Activated naive CD4-positive, alpha-beta T cell treated with anti-CD3 and anti-CD28 coated beads, Interleukin-2, amount 10 ng/mL, durations not matched to agents 7 days and 5 days (primary cell): ENCODE measurements at regions of chr5 and their contacts with region 1.

Region 1: DNA sequence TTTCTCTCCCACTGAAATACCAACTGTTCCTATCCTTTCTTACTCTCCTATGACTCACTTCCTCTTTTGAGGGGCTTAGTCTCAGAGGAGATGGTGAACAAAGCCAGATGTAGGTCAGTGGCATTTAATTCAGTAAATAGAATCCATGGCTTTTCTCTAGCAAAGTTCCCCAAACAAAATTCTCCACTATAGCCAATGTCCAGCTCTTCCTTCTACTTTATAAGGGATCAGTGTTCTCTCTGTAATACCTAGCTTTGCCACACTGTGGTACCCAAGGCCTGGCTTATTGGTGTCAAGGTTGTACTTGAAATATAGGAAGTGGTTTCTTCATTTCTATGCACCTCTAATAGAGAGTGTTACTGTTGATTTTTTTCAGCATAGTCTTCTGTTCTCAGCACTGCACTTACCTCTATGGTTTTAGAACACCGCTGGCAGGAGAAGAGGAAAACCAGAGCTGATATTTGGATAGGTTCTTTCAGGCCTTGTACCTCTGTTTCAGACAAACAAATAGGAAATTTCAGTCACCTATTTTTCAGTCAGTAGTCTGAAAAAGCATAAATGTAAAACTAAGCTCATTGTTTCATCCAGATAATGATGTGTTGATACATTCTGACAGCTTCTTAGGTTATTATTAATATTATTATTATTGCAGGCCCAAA is 40.6 kb upstream of the ITGA2 start:
- DNase-seq: peak; percentile 81
- H3K4me3 Mint-ChIP-seq: no peak overlapping the region
- H3K27ac Mint-ChIP-seq: no peak overlapping the region
- H3K4me1 Mint-ChIP-seq: peaks cover 24% of the 10 kb centered on the region
- H3K27me3 Mint-ChIP-seq: peaks cover 7% of the 10 kb centered on the region

Region 2: DNA sequence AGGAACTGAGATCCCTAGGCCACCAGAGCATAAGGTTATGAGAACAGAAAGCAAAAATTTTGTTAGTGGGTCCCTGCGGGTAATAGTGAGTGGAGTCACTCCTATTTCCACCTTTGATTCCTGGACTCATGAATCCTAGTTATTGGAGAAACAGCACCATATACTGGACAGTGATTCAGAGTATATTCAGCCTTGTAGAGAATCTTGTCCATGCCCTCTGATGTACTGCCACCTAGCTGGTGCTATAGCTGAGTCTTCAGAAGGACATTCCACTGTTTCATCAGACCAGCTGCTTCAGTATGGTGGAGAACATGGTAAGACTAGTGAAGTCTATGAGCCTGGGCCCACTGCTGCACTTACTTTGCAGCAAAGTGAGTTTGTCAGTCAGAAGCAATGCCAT is 15.6 kb after region 1 on chr5:
- CTCF ChIA-PET with region 1: interaction called, 15 read pairs
- DNase-seq: no peak
- H3K4me3 Mint-ChIP-seq: no peak overlapping the region
- H3K27ac Mint-ChIP-seq: no peak overlapping the region
- H3K4me1 Mint-ChIP-seq: no peaks in the 10 kb centered on the region
- H3K27me3 Mint-ChIP-seq: peaks cover 34% of the 10 kb centered on the region

Region 3: DNA sequence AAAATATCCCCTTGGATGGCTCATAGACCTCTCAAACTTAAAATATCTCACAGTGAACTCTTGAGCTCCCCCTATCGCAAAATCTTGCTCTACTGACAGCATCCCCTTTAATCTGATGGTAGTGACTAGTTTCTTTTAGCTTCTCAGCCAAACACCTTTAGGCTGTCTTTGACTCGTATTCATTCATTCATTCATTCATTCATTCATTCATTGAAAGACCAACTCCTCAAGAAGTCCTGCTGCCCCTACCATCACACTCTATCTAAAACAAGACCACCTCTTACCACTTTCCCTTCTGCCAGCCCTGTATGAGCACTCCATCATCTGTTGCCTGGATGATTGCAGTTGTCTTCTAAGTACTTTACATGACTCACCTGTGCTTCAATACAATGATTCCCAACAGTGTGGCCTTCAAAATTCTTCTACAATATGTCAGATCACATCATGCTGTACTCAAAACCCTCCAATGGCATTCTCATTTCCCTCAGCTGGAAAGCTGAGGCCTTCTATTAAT is 87.4 kb after region 1 on chr5:
- CTCF ChIA-PET with region 1: interaction called, 18 read pairs
- DNase-seq: no peak
- H3K4me3 Mint-ChIP-seq: no peak overlapping the region
- H3K27ac Mint-ChIP-seq: no peak overlapping the region
- H3K4me1 Mint-ChIP-seq: peaks cover 76% of the 10 kb centered on the region
- H3K27me3 Mint-ChIP-seq: no peaks in the 10 kb centered on the region

Region 4: DNA sequence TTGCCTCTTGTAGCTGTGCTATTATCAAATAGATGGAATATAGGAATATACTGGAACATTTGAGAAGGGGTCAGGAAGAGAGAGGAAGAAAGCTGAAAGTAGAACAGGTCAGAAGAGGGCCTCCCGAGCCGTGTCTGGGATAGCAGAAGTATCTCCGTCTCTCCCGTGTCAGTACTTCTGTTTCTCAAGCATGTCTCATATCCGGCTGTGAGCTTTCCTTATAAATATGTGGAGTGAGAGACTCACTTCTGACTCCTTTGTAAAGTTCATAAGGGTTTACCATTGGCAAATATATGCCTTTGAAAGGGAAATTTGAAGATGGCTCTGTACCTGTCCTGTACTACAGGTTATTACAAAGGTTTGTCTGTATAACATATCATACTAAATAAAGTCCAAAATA is 110.7 kb after region 1 on chr5:
- CTCF ChIA-PET with region 1: interaction called, 10 read pairs
- DNase-seq: no peak
- H3K4me3 Mint-ChIP-seq: no peak overlapping the region
- H3K27ac Mint-ChIP-seq: no peak overlapping the region
- H3K4me1 Mint-ChIP-seq: no peaks in the 10 kb centered on the region
- H3K27me3 Mint-ChIP-seq: no peaks in the 10 kb centered on the region

Region 5: DNA sequence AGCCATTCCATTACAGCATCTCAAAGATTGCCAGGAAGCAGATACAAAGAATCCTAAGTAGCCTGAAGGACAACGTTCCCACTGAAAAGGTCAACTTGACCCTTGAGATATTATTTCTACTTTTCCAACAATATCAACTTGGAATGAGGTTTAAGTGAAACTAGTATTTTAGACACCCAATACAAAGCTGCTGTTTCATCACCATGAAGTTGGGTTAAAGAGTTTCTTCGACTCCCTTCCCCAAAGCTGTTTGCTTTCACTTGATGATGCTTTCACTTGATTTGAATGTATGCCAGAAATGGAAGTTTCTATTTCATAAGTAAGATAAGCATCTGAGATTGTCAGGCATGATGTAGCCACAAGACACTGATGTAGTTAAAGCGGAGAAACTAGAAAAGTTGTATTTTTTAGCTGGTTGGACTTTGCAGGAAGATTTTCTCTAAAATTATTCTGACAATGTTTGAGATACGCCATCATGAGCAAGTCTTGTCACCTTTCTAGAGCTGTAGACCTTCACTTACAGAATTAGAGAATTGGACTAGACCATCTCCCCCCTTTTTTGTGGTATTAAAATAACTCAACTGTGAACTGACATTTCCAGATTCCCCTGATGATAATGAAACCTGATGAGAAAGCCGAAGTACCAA is 140.9 kb after region 1 on chr5:
- CTCF ChIA-PET with region 1: interaction called, 178 read pairs
- DNase-seq: no peak
- H3K4me3 Mint-ChIP-seq: peak overlapping the region; percentile 25
- H3K27ac Mint-ChIP-seq: peak overlapping the region; percentile 82
- H3K4me1 Mint-ChIP-seq: peaks cover 70% of the 10 kb centered on the region
- H3K27me3 Mint-ChIP-seq: no peaks in the 10 kb centered on the region

Region 6: DNA sequence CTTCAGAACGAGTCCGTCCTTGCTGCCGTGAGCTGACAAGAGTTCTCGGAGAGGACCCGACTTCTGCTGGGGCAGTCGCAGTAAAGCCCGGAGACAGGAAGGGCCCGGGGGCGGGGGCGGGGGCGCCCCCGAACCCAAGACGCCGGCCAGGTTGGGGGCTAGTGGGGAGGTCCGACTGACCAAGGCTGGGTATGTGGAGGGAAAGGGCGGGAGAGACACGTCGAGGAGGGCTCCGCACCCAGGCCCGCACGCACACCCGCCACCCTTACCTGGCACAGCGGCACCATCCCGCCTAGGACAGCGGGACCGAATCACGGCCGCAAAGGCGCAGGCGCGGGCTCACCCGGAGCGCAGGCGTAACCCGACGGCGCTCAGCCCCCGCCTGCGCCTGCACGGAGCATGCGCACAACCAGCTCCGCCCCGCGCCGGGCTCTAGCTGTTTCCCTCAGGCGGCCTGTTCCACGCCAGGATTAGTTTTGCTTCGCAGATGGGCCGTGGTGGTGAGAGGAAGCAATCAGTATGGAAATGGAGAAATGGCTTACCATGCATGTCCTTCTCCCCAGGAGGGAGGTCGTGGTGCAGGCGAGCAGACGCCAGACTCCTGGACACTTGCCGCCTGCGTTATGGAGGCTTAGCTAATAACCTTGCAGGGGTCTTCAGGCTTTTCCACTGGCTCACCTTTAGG is 161.0 kb after region 1 on chr5 and contains the start of gene MOCS2:
- CTCF ChIA-PET with region 1: interaction called, 34 read pairs
- DNase-seq: peak; percentile 93
- H3K4me3 Mint-ChIP-seq: peak within 1 kb of the TSS; percentile 95
- H3K27ac Mint-ChIP-seq: peak within 1 kb of the TSS; percentile 91
- H3K4me1 Mint-ChIP-seq: peaks cover 52% of the 10 kb centered on the region
- H3K27me3 Mint-ChIP-seq: no peaks in the 10 kb centered on the region